ENCODE measurements at regions of chr3 and their contacts with region 1.

Region 1: DNA sequence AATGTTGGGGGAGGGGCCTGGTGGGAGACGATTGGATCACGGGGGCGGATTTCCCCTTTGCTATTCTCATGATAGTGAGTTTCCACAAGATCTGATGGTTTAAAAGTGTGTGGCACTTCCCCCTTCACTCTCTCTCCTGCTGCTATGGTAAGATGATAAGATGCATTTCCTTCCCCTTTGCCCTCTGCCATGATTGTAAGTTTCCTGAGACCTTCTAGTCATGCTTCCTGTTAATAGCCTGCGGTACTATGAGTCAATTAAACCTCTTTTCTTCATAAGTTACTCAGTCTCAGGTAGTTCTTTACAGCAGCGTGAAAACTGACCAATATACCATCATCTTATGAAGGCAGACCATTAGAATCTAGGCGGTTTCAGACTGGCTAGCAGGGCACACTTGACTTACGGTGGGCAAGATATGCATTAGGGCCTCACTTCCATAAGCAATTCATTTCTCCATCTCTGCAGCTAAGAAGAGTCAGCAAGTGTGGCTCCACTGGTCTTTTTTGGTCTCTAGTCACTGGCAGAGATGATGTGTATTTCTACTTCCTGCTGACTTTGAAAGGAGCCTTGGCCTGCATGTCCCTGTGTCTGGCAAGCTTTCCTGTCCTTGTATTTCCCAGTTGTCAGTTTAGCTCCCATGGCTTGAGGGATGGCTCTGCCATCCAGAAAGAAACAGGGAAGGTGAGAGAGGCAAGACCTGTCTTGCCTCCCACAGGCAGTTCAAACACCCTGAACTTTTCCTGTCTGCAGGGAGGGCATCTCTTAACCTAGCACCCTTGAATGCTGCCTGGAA is 109.0 kb upstream of the ADAMTS9 start:
- DNase-seq: peak; percentile 88
- H3K4me3 ChIP-seq: no peak overlapping the region
- H3K27ac ChIP-seq: peak overlapping the region; percentile 87
- H3K4me1 ChIP-seq: peaks cover 26% of the 10 kb centered on the region
- H3K27me3 ChIP-seq: no peaks in the 10 kb centered on the region
- CTCF ChIP-seq: no peak
- POLR2A ChIP-seq: peak; percentile 71

Region 2: GRCh38 chr3:64916937-64917336 is 120.1 kb after region 1 on chr3:
- CTCF ChIA-PET with region 1: no interaction called
- POLR2A ChIA-PET with region 1: no interaction called
- dilution Hi-C with region 1: no loop called
- intact Hi-C with region 1: loop called (anchors 2 kb)
- DNase-seq: peak; percentile 85
- H3K4me3 ChIP-seq: no peak overlapping the region
- H3K27ac ChIP-seq: peak overlapping the region; percentile 28
- H3K4me1 ChIP-seq: peaks cover 45% of the 10 kb centered on the region
- H3K27me3 ChIP-seq: no peaks in the 10 kb centered on the region
- CTCF ChIP-seq: no peak
- POLR2A ChIP-seq: no peak

Region 3: GRCh38 chr3:64995857-64996551 is 199.2 kb after region 1 on chr3:
- CTCF ChIA-PET with region 1: no interaction called
- POLR2A ChIA-PET with region 1: no interaction called
- dilution Hi-C with region 1: no loop called
- intact Hi-C with region 1: loop called (anchors 1 kb)
- DNase-seq: peak; percentile 91
- H3K4me3 ChIP-seq: no peak overlapping the region
- H3K27ac ChIP-seq: peak overlapping the region; percentile 60
- H3K4me1 ChIP-seq: peaks cover 33% of the 10 kb centered on the region
- H3K27me3 ChIP-seq: no peaks in the 10 kb centered on the region
- CTCF ChIP-seq: no peak
- POLR2A ChIP-seq: no peak